Activated T-helper 1 cell treated with anti-CD3 and anti-CD28 coated beads, Interleukin-12 subunit alpha, Interleukin-12 subunit beta, Interleukin-2, Interleukin-4 antibody, amounts not matched to agents 30 ng/mL and 10 ng/mL and 1 ng/mL, durations not matched to agents 14 hours and 24 hours and 36 hours (primary cell): ENCODE measurements at regions of chr7 and their contacts with region 1.

Region 1: DNA sequence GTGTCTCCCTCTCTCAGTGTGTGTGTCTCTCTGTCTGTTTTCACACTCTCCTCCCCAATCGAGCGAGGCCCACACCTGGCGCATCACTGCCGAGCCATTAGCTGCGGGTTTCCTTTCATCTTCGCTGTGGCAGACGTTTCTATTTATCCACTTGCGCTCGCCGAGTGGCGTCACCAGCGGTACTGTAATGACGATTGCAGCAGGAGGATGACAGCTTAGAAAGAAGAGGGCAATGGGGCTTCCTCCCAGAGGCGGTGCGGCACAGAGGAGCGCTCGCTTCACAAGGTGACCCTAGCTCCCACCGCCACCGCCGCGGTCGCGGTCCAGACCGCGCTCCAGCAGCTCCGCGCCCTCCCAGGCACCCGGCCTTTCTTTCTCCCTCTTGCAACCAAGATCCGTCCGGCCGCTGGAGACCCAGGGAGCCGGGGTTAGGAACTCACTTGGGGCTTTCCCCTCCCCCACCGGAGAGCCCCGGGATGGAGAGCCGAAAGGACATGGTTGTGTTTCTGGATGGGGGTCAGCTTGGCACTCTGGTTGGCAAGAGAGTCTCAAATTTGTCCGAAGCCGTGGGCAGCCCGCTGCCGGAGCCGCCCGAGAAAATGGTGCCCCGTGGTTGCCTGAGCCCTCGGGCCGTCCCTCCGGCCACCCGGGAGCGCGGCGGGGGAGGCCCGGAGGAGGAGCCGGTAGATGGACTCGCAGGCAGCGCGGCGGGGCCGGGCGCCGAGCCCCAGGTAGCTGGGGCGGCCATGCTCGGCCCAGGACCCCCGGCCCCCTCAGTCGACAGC is at the start of gene EVX1:
- DNase-seq: no peak
- H3K4me3 Mint-ChIP-seq: no peak within 1 kb of the TSS
- H3K27ac Mint-ChIP-seq: peak within 1 kb of the TSS; percentile 68
- H3K4me1 Mint-ChIP-seq: no peaks in the 10 kb centered on the region
- H3K27me3 Mint-ChIP-seq: peaks cover 83% of the 10 kb centered on the region
- total RNA-seq, gene EVX1: not detected in 2 replicates

Region 2: GRCh38 chr7:26843705-26844104 is 399.0 kb before region 1 on chr7:
- intact Hi-C with region 1: no loop called
- DNase-seq: no peak
- H3K4me3 Mint-ChIP-seq: no peak overlapping the region
- H3K27ac Mint-ChIP-seq: no peak overlapping the region
- H3K4me1 Mint-ChIP-seq: no peaks in the 10 kb centered on the region
- H3K27me3 Mint-ChIP-seq: peaks cover 2% of the 10 kb centered on the region

Region 3: DNA sequence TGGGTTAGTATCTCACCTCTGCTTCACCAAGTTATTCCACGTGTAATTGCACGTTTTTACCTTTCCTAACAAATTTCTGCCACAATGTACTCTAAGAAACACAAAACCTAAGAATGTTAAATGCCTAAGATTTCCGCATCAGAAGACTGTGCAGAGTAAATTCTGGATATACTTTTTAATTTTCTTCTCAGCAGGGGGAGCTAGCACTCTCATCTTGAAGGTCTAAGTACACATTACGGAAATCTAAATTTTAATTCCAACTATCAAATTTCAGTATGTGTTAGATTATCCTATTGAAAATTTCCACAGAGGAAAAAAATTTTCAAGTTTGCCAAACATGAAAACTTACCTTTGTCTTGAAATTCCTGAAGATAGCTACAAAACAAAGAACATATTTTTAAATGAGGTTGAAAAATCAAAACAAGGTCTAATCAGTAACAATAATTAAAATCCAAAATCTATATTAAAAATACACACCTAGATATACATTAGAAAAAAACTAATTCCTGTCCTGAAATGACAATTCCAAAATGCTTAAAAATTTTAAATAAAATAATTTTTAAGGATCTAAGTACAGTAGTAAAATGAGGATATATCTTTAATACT is 388.9 kb before region 1 on chr7:
- intact Hi-C with region 1: loop called (anchors 5 kb)
- DNase-seq: no peak
- H3K4me3 Mint-ChIP-seq: no peak overlapping the region
- H3K27ac Mint-ChIP-seq: no peak overlapping the region
- H3K4me1 Mint-ChIP-seq: no peaks in the 10 kb centered on the region
- H3K27me3 Mint-ChIP-seq: peaks cover 41% of the 10 kb centered on the region

Region 4: DNA sequence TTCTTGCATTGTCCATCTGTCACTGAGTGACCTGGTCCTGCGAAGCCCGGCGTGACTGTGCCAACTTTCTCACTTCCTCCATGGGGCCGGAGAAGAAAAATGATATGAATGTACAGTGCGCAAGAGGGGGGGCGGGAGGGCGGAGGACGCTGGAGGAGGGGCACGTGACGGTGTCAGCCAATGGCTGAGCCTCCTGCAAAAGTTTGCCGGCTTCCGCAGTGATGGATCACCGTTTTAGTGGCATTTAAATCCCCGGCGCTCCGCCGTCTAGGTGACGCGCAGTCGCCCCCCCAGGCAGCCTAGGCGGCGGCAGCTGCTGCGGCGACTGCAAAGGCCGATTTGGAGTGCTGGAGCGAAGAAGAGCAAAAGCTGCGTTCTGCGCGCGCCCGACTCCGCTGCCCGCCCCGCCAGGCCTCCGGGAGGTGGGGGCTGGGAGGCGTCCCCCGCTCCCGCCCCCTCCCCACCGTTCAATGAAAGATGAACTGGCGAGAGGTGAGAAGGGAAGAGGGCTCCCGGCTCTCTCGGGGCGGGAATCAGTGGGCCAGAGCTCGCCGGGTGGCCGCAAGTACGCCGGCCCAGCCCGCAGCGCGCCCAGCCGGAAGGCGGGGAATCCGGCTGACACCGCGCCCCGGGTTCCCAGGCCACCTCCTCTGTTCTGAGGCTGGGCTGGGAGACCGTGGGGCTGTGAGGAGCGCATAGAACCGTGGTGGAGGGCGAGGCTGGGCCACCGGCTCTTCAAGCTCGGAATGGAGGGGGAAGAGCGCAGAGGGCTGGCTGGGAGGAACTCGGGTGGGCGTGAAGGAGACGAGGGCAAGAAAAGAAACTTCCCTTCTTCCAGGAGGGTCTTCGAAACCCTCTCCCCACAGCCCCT is 146.6 kb before region 1 on chr7 and contains the start of gene HOXA1:
- intact Hi-C with region 1: loop called (anchors 5 kb)
- DNase-seq: peak; percentile 48
- H3K4me3 Mint-ChIP-seq: peak within 1 kb of the TSS; percentile 85
- H3K27ac Mint-ChIP-seq: peak within 1 kb of the TSS; percentile 73
- H3K4me1 Mint-ChIP-seq: peaks cover 18% of the 10 kb centered on the region
- H3K27me3 Mint-ChIP-seq: peaks cover 76% of the 10 kb centered on the region
- total RNA-seq, gene HOXA1: 0.16 and 0.24 TPM in 2 replicates

Region 5: DNA sequence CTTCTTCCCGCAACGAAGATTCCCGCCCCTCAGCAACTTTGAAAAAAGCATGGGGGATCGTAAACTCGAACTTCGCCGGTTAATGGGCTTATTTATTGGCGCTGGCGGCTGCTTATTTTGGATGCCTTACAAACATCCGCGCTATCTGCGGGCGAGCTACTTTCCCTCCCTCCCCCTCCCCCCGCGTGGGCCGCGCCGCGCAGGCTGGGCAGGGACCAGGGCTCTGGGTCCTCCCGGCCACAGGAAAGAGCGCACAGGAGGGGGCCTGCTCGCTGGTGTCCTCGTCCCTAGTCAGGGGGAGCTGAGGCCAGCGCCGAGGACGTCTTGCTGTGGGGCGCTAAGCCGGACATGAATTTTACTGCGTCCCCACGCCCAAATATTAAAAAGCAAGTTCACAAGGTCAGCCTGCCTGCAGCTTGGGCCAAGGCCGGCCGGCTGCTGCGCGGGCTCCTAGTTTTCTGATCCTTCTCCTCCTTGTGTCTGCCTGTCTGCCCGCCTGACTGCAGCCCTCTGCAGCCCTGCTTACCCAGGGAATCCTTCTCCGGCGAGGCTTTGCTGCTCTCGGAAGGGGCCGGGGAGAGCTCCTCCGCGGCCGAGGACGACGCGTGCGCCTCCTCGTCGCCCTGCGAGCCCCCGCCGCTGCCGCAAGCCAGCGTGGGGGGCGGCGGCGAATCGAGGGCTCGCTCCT is 69.8 kb before region 1 on chr7:
- intact Hi-C with region 1: loop called (anchors 2 kb)
- DNase-seq: no peak
- H3K4me3 Mint-ChIP-seq: no peak overlapping the region
- H3K27ac Mint-ChIP-seq: peak overlapping the region; percentile 92
- H3K4me1 Mint-ChIP-seq: peaks cover 8% of the 10 kb centered on the region
- H3K27me3 Mint-ChIP-seq: peaks cover 53% of the 10 kb centered on the region

Region 6: DNA sequence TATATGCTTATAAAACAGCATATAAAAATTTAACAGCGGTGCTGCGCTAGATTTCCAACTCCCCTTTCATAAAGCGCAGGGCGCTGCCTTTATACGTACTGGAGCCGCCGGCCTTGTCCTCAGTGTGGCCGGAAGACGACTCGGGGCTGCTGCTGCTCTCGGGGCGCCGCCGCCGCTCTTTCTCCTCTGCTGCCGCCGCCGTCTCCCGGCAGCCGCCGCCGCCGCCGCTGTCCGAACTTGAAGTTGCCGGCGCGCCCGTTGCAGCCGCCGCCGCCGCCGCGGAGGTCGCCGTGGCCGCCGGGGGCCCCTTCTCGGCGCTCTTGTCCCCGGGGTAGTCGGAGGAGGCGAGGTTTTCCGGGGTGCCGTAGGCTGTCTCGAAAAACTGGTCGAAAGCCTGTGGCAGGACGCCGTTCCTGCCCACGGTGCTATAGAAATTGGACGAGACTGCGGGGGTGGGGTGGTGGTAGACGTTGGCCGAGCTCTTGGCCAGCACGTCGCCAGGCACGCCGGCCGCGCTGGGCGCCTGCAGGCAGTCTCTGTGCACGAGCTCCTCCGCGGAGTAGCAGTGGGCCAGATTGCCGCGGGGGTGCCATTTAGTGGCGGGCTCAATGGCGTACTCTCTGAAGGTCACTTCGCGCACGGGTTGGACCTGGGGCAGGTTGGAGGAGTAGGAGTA is 58.3 kb before region 1 on chr7:
- intact Hi-C with region 1: loop called (anchors 5 kb)
- DNase-seq: no peak
- H3K4me3 Mint-ChIP-seq: no peak overlapping the region
- H3K27ac Mint-ChIP-seq: peak overlapping the region; percentile 87
- H3K4me1 Mint-ChIP-seq: peaks cover 5% of the 10 kb centered on the region
- H3K27me3 Mint-ChIP-seq: peaks cover 81% of the 10 kb centered on the region

Region 7: DNA sequence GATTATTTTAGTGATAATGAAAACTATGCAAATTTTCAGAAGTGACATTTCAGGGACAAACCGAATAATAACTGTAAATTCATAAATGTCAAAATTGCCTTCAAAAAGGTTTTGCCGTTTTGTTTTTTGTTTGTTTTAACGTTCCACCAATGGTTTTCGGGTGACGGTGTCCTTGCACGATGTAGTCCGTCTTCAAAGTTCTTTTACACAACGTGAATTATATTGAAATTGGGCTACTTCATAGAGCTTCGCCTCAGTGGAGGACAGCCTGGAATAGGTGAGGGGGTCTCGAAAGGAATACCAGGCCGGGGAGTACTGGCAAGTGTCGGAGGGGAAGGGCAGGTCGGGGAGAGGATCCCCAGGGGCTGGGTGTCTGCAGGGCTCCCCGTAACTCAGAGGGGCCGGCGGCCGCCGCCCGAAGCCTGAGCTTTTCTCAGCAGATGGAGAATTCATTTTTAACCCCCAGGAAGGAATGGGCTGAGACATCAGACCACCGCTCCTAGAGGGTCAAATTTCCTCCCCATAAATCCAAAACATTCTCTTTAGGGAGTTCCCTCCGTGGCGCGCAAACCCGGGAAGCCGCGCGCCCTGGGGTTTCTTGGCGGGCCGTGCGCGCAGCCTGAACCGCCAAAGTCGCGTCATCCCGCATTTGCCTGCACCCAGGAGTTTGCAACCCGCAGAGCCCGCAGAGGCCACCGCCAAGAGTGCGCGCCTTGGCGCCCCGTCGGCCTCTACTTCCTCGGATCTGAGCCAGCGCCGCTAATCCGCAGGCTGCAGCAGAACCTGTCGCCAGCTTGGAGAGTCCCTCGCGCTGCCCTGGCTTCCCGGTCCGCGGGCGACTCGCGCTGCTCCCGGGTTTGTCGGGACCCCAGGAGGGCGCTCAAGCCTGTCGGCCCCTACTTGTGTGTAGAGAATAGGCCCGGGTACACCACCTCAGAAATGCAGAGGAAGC is 17.5 kb before region 1 on chr7:
- intact Hi-C with region 1: loop called (anchors 2 kb)
- DNase-seq: no peak
- H3K4me3 Mint-ChIP-seq: no peak overlapping the region
- H3K27ac Mint-ChIP-seq: no peak overlapping the region
- H3K4me1 Mint-ChIP-seq: peaks cover 4% of the 10 kb centered on the region
- H3K27me3 Mint-ChIP-seq: peaks cover 75% of the 10 kb centered on the region